Gastrocnemius medialis (tissue), 4 donors: ENCODE measurements at regions of chr2 and their contacts with region 1.

Region 1: DNA sequence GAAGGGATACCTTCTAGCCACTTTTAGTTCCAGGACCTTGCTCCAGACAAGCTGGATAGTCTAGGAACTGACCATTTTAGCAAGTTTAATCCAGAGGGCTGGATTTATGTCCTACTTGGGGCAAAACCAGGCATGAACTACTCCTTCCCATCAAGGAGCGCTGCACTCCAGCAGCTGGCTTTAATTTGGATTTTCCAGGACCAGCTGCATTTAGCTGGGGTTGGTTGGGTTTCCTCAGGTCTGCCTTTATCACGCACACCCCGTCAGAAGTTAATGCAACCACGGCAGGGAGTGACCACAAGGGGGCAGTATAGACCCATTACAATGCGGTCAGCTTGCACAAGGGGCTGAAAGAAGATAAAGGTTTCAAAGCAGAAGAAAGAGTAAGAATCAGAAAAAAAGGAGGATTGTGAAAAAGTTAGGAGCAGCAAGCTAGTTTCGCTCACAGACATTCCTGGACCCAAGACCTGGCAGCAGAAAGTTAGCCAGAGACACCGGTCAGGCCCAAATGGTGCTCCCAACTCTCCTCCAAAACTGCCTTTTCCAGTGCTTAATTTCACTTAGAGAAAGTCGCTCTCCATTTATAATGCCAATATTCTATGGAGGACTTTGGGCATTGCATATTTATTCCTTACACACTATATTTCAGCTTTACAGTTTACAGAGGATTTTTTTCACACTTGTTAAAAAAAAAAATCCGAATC is 40.1 kb downstream of the SLC4A1AP start:
- DNase-seq: peak; percentile 74 to 81
- ATAC-seq: peak; percentile 30 to 40
- H3K4me3 ChIP-seq: no peak overlapping the region
- H3K27ac ChIP-seq: peak overlapping the region; percentile 84 to 96 (median 94)
- H3K4me1 ChIP-seq: peaks cover 39 to 62% of the 10 kb centered on the region in 2 donors
- H3K27me3 ChIP-seq: no peaks in the 10 kb centered on the region
- CTCF ChIP-seq: peak; percentile 88 to 96 (median 94)
- POLR2A ChIP-seq: no peak

Region 2: GRCh38 chr2:27823569-27823968 is 119.8 kb after region 1 on chr2:
- in situ Hi-C with region 1: no loop called
- intact Hi-C with region 1: loop called (anchors 2 kb)
- DNase-seq: peak; percentile 27 to 50
- ATAC-seq: peak; percentile 71 to 74
- H3K4me3 ChIP-seq: peak overlapping the region in 3 of 4 donors; percentile 3 to 43 (median 33)
- H3K27ac ChIP-seq: peak overlapping the region; percentile 75 to 82 (median 78)
- H3K4me1 ChIP-seq: peaks cover 12 to 30% of the 10 kb centered on the region in 2 donors
- H3K27me3 ChIP-seq: no peaks in the 10 kb centered on the region
- CTCF ChIP-seq: peak; percentile 46 to 64 (median 55)
- POLR2A ChIP-seq: no peak

Region 3: GRCh38 chr2:28164280-28164801 is 460.6 kb after region 1 on chr2:
- in situ Hi-C with region 1: no loop called
- intact Hi-C with region 1: loop called (anchors 1 kb)
- DNase-seq: peak; percentile 68 to 88
- ATAC-seq: peak; percentile 81 to 86
- H3K4me3 ChIP-seq: peak overlapping the region in 3 of 4 donors; percentile 17 to 25 (median 24)
- H3K27ac ChIP-seq: peak overlapping the region; percentile 89 to 96 (median 92)
- H3K4me1 ChIP-seq: peaks cover 36 to 61% of the 10 kb centered on the region in 2 donors
- H3K27me3 ChIP-seq: no peaks in the 10 kb centered on the region
- CTCF ChIP-seq: no peak
- POLR2A ChIP-seq: peak in 1 of 2 donors; percentile 50

Region 4: GRCh38 chr2:28342081-28342967 is 638.5 kb after region 1 on chr2:
- in situ Hi-C with region 1: no loop called
- intact Hi-C with region 1: loop called (anchors 5 kb)
- DNase-seq: peak; percentile 56 to 72
- ATAC-seq: peak; percentile 54 to 60
- H3K4me3 ChIP-seq: peak overlapping the region; percentile 26 to 37 (median 32)
- H3K27ac ChIP-seq: peak overlapping the region; percentile 85 to 89 (median 87)
- H3K4me1 ChIP-seq: peaks cover 73 to 82% of the 10 kb centered on the region in 2 donors
- H3K27me3 ChIP-seq: no peaks in the 10 kb centered on the region
- CTCF ChIP-seq: no peak
- POLR2A ChIP-seq: peak; percentile 52 to 69

Region 5: DNA sequence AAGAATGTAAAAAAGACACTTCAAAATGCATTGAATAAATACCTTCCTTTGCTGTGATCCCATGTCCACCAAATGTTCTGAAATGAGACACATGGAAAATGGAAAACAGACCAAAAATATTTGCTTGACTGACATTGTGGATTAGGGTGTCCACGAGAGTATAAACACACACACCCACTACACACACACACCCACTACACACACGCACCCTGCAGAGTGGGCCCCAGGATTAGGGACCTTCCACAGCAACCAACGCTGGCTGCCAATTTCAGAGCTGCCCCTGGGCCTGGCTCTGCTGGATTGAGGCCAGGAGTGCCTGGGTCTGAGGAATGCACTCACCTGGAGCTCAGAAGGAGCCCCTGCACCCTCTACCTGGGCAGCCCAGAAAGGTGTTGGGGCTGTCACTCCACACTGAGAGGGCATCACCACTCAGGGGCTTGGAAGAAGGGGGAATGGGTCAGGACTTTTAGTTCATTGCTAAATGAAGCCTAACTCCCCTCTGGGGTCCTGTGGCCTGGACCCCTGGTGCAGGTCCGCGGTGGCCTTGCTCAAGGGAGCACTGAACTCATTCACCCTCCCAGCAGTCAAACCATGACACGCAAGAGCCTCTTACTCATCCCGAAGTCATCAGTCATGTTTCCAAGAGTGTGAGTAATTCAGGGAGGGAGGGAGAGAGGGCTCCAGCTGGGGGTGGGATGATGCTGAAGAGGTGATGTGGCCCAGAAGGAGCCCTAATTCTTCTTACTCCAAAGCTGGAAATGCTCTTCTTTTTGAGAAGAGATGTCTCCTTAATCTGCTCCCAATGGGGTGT is 741.9 kb after region 1 on chr2:
- in situ Hi-C with region 1: loop called in 1 of 4 experiments (anchors 10 kb)
- intact Hi-C with region 1: no loop called
- DNase-seq: peak in 1 of 2 donors; percentile 31
- ATAC-seq: peak; percentile 61 to 73
- H3K4me3 ChIP-seq: no peak overlapping the region
- H3K27ac ChIP-seq: no peak overlapping the region
- H3K4me1 ChIP-seq: no peaks in the 10 kb centered on the region
- H3K27me3 ChIP-seq: no peaks in the 10 kb centered on the region
- CTCF ChIP-seq: no peak
- POLR2A ChIP-seq: no peak

Region 6: DNA sequence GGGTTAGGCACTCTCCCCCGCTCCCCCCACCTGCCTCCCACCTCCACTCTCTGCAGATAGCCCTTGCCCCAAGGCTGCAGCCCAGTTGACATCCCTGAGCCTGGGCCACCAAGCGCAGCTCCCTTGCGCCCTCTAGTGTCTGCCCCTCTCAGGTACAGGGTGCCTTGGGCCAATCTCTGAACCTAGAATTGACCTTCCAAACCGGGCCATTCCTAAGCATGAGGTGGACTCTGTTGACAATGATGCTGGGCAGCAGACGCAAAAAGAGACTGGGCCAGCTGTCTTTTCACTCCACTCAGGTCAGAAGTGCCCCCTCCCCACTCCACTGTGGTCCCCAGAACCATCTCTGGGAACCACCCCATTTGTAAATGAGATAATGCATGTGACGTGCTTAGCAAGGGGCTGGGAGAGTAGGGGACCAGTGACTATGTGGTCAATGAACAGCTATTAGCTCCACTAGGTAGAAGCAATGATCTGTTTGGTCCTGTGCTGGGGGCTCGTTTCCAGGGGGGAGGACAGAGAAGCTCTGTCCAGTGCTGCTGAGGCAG is 748.8 kb after region 1 on chr2:
- in situ Hi-C with region 1: loop called in 1 of 4 experiments (anchors 10 kb)
- intact Hi-C with region 1: loop called (anchors 2 kb)
- DNase-seq: peak; percentile 54 to 65
- ATAC-seq: peak; percentile 60 to 82
- H3K4me3 ChIP-seq: no peak overlapping the region
- H3K27ac ChIP-seq: no peak overlapping the region
- H3K4me1 ChIP-seq: no peaks in the 10 kb centered on the region
- H3K27me3 ChIP-seq: no peaks in the 10 kb centered on the region
- CTCF ChIP-seq: peak; percentile 92 to 97 (median 96)
- POLR2A ChIP-seq: no peak